ENCODE measurements at regions of chr17 and their contacts with region 1.

Region 1: GRCh38 chr17:45218895-45219661 is 2.6 kb upstream of the FMNL1 start:
- DNase-seq: peak; percentile 90 to 91
- ATAC-seq: peak; percentile 88 to 93 (median 93)
- H3K4me3 ChIP-seq: no peak overlapping the region
- H3K27ac ChIP-seq: no peak overlapping the region
- H3K4me1 ChIP-seq: peaks cover 3% of the 10 kb centered on the region
- H3K27me3 ChIP-seq: peaks cover 0 to 13% (median 8%) of the 10 kb centered on the region in 3 donors
- CTCF ChIP-seq: peak; percentile 98

Region 2: GRCh38 chr17:45148183-45149036 is 70.7 kb before region 1 on chr17 and contains the start of gene HEXIM1:
- intact Hi-C with region 1: no loop called
- DNase-seq: peak; percentile 99 to 100
- ATAC-seq: peak; percentile 77 to 84 (median 80)
- H3K4me3 ChIP-seq: peak within 1 kb of the TSS; percentile 76
- H3K27ac ChIP-seq: peak within 1 kb of the TSS; percentile 97
- H3K4me1 ChIP-seq: peaks cover 28% of the 10 kb centered on the region
- H3K27me3 ChIP-seq: no peaks in the 10 kb centered on the region
- CTCF ChIP-seq: no peak
- total RNA-seq, gene HEXIM1: 21.3 to 52.2 (median 31.5) TPM

Region 3: DNA sequence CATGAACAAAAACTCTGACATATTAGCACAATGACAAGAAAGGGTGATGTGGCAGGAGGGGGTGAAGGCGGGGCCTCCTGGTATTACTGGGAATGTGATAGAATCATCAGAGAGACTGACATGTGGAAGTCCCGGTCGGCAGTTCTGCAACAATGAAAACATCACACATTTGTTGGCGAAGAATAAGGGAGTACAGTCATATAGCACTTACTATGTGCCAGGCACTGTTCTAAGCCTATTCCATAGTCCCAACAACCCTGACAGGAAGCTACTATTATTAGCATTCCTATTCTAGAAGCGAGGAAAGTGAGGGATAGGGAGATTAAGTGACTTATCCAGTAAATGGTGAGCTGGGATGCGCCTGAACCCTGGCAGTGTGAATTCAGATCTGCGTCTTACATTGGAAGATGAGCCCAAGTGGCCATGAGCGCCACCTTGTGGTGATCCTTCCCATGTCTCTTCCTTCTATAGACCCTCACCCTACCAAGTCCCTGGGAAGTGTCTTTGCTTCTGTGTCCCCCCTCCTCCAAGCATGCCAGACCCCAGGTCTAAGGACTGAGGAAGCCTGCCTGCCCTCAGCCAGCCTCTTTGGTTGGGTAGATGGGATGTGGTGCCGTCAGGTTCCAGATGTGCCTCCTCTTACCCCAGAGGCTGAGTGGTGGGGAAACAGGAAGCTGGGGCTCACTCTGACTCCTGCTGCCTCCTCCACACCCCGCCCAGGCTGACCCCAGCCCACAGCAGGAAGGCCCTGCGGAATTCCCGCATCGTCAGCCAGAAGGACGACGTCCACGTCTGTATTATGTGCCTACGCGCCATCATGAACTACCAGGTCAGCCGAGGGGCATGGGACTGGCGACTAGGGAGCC is 16.6 kb after region 1 on chr17:
- intact Hi-C with region 1: loop called in 1 of 2 experiments (anchors 2 kb)
- DNase-seq: peak; percentile 76 to 85
- ATAC-seq: peak; percentile 50 to 84 (median 63)
- H3K4me3 ChIP-seq: no peak overlapping the region
- H3K27ac ChIP-seq: no peak overlapping the region
- H3K4me1 ChIP-seq: no peaks in the 10 kb centered on the region
- H3K27me3 ChIP-seq: peaks cover 0 to 3% (median 2%) of the 10 kb centered on the region in 3 donors
- CTCF ChIP-seq: peak; percentile 73

Region 4: DNA sequence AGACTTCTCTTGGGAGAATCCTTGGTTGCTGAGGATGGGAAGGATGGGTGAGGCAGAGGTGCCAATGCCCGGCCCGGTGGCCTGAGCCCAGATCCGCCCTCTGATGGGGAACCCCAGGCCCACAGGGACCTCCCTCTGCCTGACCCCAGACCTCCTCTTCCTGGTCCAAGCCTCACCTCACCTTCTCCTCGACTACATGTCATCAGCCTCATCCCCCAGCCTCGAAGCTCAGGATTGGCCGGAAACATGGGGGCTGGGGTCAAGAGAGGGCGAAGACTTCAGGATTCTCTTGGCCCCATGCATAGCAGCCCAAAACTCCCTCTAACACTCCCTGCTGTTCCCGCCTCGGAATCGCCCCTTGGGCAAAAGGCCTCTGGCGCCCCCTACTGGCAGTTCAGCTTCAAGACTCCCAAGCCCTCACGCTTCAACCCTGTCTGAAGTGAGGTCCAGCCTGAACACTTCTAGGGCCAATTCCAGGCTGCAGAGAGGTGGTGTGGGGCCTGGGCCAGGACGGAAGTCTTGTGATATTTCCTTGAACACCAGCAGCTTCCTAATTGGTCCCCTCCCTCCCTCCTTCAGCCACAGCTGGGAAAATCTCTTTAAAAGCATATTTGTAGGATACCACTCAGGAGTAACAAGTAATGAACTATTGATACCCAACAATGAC is 166.4 kb after region 1 on chr17:
- intact Hi-C with region 1: loop called (anchors 1 kb)
- DNase-seq: peak; percentile 89 to 94
- ATAC-seq: peak; percentile 90 to 99 (median 94)
- H3K4me3 ChIP-seq: no peak overlapping the region
- H3K27ac ChIP-seq: peak overlapping the region; percentile 46
- H3K4me1 ChIP-seq: peaks cover 4% of the 10 kb centered on the region
- H3K27me3 ChIP-seq: peaks cover 0 to 1% (median 0%) of the 10 kb centered on the region in 3 donors
- CTCF ChIP-seq: peak; percentile 99

Region 5: DNA sequence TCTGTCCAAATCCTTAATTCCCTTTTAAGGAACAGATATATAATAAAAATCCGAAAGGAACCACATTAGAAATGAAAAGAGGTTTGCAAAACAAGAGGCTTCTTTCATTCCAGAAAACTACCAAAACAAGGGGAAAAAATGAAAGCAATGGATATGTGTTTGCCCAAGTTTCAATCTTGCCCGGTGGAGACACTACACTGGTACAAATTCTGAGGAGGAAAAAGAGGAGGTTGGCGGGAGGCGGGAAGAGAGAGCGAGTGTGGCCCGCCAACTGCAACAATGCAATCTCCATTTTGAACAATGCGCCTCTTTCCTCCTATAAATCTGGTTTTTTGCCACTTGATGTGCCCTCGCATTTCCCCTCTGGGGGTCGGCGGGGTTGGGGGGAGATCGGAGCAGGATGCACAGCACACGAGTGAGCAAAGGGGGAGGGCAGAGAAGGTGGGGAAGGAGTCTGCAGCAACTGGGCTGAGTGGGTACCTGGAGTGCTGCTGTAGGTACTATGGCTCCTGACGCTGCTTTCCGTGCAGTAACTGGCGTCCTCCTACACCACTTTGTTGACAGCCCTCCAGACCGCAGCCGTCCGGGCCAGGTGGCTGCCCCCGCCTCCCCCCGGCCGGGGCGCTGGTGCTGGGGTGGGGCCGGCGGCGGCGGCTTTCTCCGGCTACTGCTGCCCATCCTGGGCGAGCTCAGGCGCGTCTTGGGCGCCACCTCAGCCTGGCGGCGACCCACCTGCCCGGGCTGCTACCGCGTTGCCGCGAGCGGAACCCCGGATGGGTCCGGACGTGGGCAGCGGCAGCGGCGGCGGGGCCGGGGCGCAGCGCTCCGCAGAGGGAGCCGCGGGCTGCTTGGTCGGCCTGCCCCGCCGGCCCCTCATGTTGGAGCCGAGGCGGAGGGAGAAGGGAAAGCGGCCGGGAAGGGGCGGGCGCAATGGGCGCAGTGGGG is 365.3 kb after region 1 on chr17:
- intact Hi-C with region 1: loop called in 1 of 2 experiments (anchors 5 kb)
- DNase-seq: peak; percentile 66 to 83
- ATAC-seq: peak; percentile 79 to 89 (median 80)
- H3K4me3 ChIP-seq: peak overlapping the region; percentile 71
- H3K27ac ChIP-seq: peak overlapping the region; percentile 70
- H3K4me1 ChIP-seq: peaks cover 36% of the 10 kb centered on the region
- H3K27me3 ChIP-seq: peaks cover 0 to 42% (median 13%) of the 10 kb centered on the region in 3 donors
- CTCF ChIP-seq: no peak